ENCODE measurements at regions of chr18 and their contacts with region 1.

Region 1: DNA sequence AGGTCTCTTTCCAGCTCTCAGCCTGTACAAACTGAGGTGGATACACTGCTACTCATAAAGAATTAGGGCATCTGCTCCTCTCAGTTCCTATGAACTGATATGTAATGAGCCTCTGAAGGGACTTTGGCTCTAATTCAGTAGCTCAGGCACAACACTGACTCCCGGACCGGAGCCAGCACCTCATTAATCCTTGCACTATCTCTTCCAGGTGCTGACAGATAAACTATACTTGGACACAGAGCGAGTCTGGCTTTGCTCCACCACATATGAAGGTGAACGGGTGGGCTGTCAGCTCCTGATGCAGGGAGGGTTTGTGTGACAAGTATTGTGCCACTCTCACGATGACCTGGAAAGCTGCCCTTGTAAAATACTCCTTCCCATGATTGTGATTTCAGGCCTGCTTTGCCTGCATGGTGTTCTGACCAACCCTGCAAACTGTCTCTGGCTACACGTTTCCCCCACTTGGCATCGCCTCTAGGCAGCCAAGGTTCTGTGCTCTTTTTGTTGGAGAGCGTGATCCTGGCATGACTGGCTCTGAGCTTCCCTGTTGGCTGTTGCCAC is 111.6 kb upstream of the LMAN1 start:
- DNase-seq: no peak
- H3K4me3 ChIP-seq: no peak overlapping the region
- H3K27ac ChIP-seq: peak overlapping the region in 1 of 4 donors; percentile 15
- H3K4me1 ChIP-seq: no peaks in the 10 kb centered on the region
- H3K27me3 ChIP-seq: no peaks in the 10 kb centered on the region
- CTCF ChIP-seq: no peak
- EP300 ChIP-seq: no peak
- POLR2A ChIP-seq: no peak

Region 2: DNA sequence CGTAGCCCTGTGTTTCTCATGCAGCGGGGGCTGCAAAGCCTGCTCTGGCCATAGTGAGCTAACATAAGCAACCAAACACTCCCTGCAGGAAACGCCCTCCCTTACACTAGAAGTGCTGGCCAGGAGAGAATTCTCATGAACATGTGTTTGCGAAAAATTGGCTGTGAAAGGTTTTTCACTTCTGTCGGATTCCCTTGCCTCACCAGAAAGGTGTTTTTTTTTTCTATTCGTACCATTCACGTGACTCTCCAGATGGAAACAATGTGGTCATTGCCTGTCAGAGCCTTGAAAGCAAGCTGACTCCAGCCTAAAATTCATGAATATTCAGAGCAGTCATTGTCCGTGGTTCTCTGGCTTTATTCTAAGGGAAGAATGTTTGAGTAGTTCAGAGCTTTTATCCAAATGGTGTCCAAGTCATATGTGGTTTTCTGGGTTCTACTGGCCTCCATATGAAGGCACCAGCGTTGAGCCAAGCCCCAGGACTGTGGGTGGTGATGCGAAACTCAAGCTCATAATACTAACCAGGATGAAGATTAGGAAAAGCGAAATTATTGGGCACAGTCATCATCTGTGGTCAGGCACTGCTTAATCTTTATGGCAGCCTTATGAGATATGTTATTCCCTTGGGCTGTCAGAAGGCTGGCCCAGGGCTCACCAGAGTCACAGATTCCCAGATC is 1078.2 kb before region 1 on chr18:
- in situ Hi-C with region 1: no loop called
- intact Hi-C with region 1: no loop called
- DNase-seq: no peak
- H3K4me3 ChIP-seq: no peak overlapping the region
- H3K27ac ChIP-seq: peak overlapping the region; percentile 57 to 77 (median 66)
- H3K4me1 ChIP-seq: peaks cover 8 to 32% (median 13%) of the 10 kb centered on the region in 4 donors
- H3K27me3 ChIP-seq: no peaks in the 10 kb centered on the region
- CTCF ChIP-seq: no peak
- EP300 ChIP-seq: no peak
- POLR2A ChIP-seq: no peak

Region 3: GRCh38 chr18:59516356-59517155 is 45.9 kb after region 1 on chr18:
- in situ Hi-C with region 1: no loop called
- intact Hi-C with region 1: loop called (anchors 5 kb)
- DNase-seq: peak; percentile 16
- H3K4me3 ChIP-seq: no peak overlapping the region
- H3K27ac ChIP-seq: peak overlapping the region in 3 of 4 donors; percentile 5 to 75 (median 61)
- H3K4me1 ChIP-seq: peaks cover 0 to 14% (median 6%) of the 10 kb centered on the region in 4 donors
- H3K27me3 ChIP-seq: no peaks in the 10 kb centered on the region
- CTCF ChIP-seq: no peak
- EP300 ChIP-seq: peak; percentile 32
- POLR2A ChIP-seq: no peak

Region 4: DNA sequence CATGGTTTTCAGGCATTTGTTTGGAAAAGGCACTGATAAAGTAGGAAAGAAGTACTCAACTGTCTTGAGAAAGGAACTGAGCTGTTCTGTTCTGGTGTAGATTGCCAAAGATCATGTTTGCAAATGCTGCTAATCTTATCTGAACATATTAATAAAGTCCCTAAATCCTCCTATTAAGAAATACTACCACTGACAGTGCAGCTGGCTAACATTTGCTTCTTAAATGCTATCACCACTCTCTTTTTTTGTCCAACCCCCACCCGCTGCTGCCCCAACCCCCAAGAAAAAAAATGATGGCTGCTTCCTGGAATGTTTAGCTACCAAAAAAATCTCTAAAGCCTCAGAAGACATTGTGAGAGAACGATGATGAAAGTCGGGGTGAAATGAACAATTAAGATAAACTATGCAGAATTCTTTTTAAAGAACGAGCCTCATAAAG is 95.9 kb after region 1 on chr18:
- in situ Hi-C with region 1: no loop called
- intact Hi-C with region 1: no loop called
- DNase-seq: no peak
- H3K4me3 ChIP-seq: no peak overlapping the region
- H3K27ac ChIP-seq: peak overlapping the region in 2 of 4 donors; percentile 39 to 56
- H3K4me1 ChIP-seq: peaks cover 0 to 7% (median 0%) of the 10 kb centered on the region in 4 donors
- H3K27me3 ChIP-seq: no peaks in the 10 kb centered on the region
- CTCF ChIP-seq: no peak
- EP300 ChIP-seq: no peak
- POLR2A ChIP-seq: no peak

Region 5: DNA sequence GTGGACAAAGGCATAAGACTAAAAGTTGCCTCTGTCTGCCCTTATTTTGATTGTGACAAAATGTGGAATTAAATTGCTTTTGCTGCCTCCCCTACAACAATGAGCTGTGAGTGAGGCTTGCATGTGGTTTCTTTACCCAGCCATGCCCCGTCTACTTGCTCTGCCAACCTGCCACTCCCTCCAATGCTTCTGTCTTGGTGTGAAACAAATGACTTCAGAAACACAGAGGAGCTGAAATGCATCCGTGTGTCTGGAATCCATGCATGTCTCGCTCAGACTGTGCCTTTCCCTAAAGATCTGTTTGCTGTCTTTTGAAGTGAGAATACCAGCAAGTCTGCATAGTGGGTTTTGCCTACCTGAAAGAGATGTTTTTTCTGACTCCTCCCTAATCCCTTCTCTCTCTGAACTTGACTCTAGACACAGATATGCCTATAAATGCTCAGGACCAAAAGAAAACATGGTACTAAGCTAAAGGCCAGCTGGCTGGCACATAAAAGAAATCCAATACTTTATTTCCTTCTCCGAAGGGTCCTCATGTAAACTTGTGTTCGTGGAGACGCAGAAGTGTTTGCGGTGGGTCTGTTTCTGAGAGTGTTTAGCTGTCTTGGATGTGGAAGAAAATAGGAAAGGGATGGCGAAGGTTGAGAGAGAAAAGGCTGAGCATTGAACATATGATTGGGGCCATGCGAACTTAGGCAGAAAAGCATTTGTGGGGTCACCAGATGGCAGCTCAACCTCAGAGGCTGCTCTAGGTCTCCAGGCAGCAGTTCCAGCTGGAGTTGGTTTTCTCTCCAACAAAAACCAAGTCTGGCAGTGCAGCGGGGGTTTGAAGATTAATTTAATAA is 106.1 kb after region 1 on chr18:
- in situ Hi-C with region 1: no loop called
- intact Hi-C with region 1: no loop called
- DNase-seq: no peak
- H3K4me3 ChIP-seq: no peak overlapping the region
- H3K27ac ChIP-seq: no peak overlapping the region
- H3K4me1 ChIP-seq: no peaks in the 10 kb centered on the region
- H3K27me3 ChIP-seq: no peaks in the 10 kb centered on the region
- CTCF ChIP-seq: no peak
- EP300 ChIP-seq: no peak
- POLR2A ChIP-seq: no peak